ENCODE measurements at regions of chr4 and their contacts with region 1.

Region 1: GRCh38 chr4:139099366-139099982 is 77.5 kb downstream of the ELF2 start:
- DNase-seq: peak; percentile 92
- H3K4me3 Mint-ChIP-seq: no peak overlapping the region
- H3K27ac Mint-ChIP-seq: no peak overlapping the region
- H3K4me1 Mint-ChIP-seq: peaks cover 6% of the 10 kb centered on the region
- H3K27me3 Mint-ChIP-seq: no peaks in the 10 kb centered on the region
- CTCF ChIP-seq: peak; percentile 80

Region 2: GRCh38 chr4:138367942-138368341 is 731.5 kb before region 1 on chr4:
- CTCF ChIA-PET with region 1: no interaction called
- POLR2A ChIA-PET with region 1: no interaction called
- intact Hi-C with region 1: no loop called
- DNase-seq: no peak
- H3K4me3 Mint-ChIP-seq: no peak overlapping the region
- H3K27ac Mint-ChIP-seq: no peak overlapping the region
- H3K4me1 Mint-ChIP-seq: no peaks in the 10 kb centered on the region
- H3K27me3 Mint-ChIP-seq: no peaks in the 10 kb centered on the region
- CTCF ChIP-seq: no peak

Region 3: DNA sequence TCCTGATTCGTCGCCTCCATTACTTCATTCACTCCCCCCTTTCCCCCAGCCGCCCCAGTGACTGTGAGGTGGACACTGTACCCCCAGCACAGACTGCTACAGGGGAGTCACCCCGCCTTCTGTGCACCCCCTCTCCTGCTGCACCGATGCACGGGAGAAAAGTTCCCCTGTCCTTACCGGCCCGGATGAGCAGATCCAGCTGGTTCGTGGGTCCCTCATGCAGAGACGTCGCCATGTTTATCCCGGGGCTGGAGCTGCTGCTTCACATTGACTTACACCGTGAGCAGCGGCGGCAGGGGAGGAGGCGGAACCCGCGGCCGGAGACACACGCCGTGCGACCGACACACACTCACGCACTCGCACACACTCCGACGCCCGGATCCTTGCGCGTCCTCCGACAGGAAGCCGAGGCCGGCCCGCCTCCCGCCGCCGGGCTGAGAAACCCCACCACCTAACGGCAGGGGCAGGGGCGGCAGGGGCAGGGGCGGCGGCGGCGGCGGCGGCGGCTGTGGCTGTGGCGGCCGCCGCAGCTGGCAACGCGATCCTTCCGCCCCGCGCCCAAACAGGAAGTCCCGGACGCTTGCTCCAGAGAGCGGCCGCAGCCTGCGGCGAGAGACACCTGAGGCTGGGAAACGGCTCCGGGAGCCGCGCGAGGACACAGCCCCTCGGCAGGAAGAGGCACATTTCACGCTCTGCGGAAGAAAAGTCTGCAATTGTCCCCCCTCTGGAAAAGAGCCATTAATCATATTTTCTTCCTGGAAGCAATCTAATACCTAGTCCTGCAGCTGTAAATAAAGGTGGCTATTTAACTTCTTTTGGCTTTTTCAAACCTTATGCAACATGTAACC is 15.3 kb before region 1 on chr4:
- CTCF ChIA-PET with region 1: interaction called, 10 read pairs
- POLR2A ChIA-PET with region 1: interaction called, 18 read pairs
- intact Hi-C with region 1: no loop called
- DNase-seq: peak; percentile 91
- H3K4me3 Mint-ChIP-seq: peak overlapping the region; percentile 97
- H3K27ac Mint-ChIP-seq: peak overlapping the region; percentile 95
- H3K4me1 Mint-ChIP-seq: peaks cover 15% of the 10 kb centered on the region
- H3K27me3 Mint-ChIP-seq: no peaks in the 10 kb centered on the region
- CTCF ChIP-seq: no peak

Region 4: GRCh38 chr4:139153420-139154133 is 54.1 kb after region 1 on chr4:
- CTCF ChIA-PET with region 1: interaction called, 14 read pairs
- POLR2A ChIA-PET with region 1: interaction called, 3 read pairs
- intact Hi-C with region 1: no loop called
- DNase-seq: no peak
- H3K4me3 Mint-ChIP-seq: no peak overlapping the region
- H3K27ac Mint-ChIP-seq: peak overlapping the region; percentile 46
- H3K4me1 Mint-ChIP-seq: peaks cover 7% of the 10 kb centered on the region
- H3K27me3 Mint-ChIP-seq: no peaks in the 10 kb centered on the region
- CTCF ChIP-seq: no peak